PC-9 (cell line): ENCODE measurements at regions of chr12 and their contacts with region 1.

Region 1: GRCh38 chr12:27034607-27035293 is 12.4 kb downstream of the MED21 start:
- DNase-seq: no peak
- H3K4me3 ChIP-seq: no peak overlapping the region
- H3K27ac ChIP-seq: no peak overlapping the region
- H3K4me1 ChIP-seq: no peaks in the 10 kb centered on the region
- H3K27me3 ChIP-seq: no peaks in the 10 kb centered on the region
- CTCF ChIP-seq: no peak

Region 2: GRCh38 chr12:26369588-26369987 is 665.2 kb before region 1 on chr12:
- CTCF ChIA-PET with region 1: no interaction called
- POLR2A ChIA-PET with region 1: no interaction called
- intact Hi-C with region 1: no loop called
- DNase-seq: peak; percentile 25 to 46
- H3K4me3 ChIP-seq: no peak overlapping the region
- H3K27ac ChIP-seq: no peak overlapping the region
- H3K4me1 ChIP-seq: peaks cover 14% of the 10 kb centered on the region; the same call in 1 of the 2 replicates
- H3K27me3 ChIP-seq: no peaks in the 10 kb centered on the region
- CTCF ChIP-seq: no peak

Region 3: GRCh38 chr12:26488353-26488752 is 546.4 kb before region 1 on chr12:
- CTCF ChIA-PET with region 1: no interaction called
- POLR2A ChIA-PET with region 1: no interaction called
- intact Hi-C with region 1: no loop called
- DNase-seq: no peak
- H3K4me3 ChIP-seq: no peak overlapping the region
- H3K27ac ChIP-seq: no peak overlapping the region
- H3K4me1 ChIP-seq: peaks cover 5% of the 10 kb centered on the region
- H3K27me3 ChIP-seq: no peaks in the 10 kb centered on the region
- CTCF ChIP-seq: no peak

Region 4: DNA sequence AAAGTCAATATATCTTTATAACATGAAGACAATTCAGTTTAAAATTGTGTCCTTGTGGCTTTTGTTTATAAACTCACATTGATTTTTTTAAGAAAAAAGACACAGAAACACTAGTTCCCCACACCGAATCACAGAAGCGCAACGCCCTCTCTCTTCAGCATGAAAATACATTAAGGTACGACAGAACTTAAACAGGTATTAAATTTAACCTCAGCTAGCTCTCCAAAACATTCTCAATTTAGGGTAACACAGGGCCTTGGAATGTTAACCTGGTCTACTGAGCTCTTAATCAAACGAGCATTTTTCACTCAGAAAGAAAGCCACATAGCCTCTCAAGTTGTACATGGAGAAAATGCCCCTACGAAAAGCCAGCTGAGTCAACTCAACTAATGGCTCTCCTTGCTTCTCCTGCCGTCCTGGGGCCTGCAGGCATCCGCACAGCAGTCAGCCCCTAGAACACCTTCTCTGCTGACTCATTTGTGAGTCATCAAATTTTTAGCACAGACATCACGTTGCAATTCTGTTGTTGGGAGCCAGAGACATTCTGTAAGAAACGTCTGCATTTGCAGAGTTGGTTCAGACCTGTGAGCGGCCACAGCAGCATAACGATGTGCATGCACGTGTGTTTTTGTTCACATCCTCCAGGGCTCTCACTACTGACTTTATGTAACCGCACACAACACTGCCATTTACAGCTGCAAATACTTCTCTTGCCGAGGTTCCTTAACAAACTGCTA is 343.3 kb before region 1 on chr12:
- CTCF ChIA-PET with region 1: no interaction called
- POLR2A ChIA-PET with region 1: interaction called, 11 read pairs
- intact Hi-C with region 1: no loop called
- DNase-seq: peak; percentile 69 to 88
- H3K4me3 ChIP-seq: peak overlapping the region; percentile 6; the same call in 1 of the 2 replicates
- H3K27ac ChIP-seq: peak overlapping the region; percentile 44
- H3K4me1 ChIP-seq: peaks cover 16% of the 10 kb centered on the region
- H3K27me3 ChIP-seq: no peaks in the 10 kb centered on the region
- CTCF ChIP-seq: no peak

Region 5: DNA sequence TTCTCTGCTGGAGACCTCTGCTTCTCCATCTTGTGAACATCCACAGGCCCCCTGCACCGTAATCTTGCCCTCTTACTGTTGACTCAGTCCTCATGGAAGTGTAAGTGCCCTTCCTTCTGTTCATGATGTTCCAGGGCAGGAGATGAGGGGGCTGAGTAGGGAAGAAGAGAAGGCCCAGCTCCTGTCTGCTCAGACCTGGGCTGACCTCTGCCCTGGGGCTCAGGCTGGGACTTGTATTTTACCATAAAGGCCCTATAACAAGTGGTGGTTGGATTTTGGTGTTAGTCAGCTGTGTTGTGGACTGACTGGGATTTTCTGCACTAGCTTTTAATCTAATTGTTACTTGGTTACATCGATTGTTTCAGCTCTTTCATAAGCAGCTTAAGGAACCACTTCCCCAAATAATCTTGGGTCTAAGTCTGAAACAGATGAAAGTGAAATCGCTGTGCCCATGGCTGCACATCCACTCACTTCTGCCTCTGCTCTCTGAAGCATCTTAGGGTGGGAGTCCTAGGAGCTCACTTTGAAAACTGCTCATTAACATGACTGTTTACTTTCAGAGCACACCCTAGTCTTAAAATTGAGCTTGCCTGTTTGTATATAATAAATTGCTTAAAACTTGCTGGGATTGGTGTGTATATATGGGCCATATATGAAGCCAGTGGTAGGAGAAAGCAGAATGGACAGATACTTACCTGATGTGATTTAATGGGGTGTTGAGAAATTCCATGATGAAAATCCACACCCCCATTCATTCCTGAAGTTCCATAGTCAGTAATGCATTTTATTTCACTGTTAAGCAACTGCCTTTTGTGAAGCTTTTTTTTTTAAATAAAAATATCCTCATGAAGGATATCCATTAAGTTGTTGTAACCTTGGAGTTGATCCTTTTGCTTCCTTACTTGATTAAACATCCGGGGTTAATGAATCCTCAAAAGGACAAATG is 29.9 kb after region 1 on chr12:
- CTCF ChIA-PET with region 1: no interaction called
- POLR2A ChIA-PET with region 1: no interaction called
- intact Hi-C with region 1: no loop called
- DNase-seq: no peak
- H3K4me3 ChIP-seq: no peak overlapping the region
- H3K27ac ChIP-seq: no peak overlapping the region
- H3K4me1 ChIP-seq: no peaks in the 10 kb centered on the region
- H3K27me3 ChIP-seq: no peaks in the 10 kb centered on the region
- CTCF ChIP-seq: no peak

Region 6: GRCh38 chr12:27324530-27324929 is 289.8 kb after region 1 on chr12:
- CTCF ChIA-PET with region 1: interaction called, 11 read pairs
- POLR2A ChIA-PET with region 1: no interaction called
- intact Hi-C with region 1: no loop called
- DNase-seq: no peak
- H3K4me3 ChIP-seq: no peak overlapping the region
- H3K27ac ChIP-seq: no peak overlapping the region
- H3K4me1 ChIP-seq: peaks cover 6% of the 10 kb centered on the region
- H3K27me3 ChIP-seq: no peaks in the 10 kb centered on the region
- CTCF ChIP-seq: no peak